CD14-positive monocyte (primary cell): ENCODE measurements at regions of chr12 and their contacts with region 1.

Region 1: GRCh38 chr12:110100315-110100970 is 23.7 kb upstream of the IFT81 start:
- DNase-seq: peak; percentile 65 to 80 (median 80)
- H3K4me3 ChIP-seq: no peak overlapping the region
- H3K4me3 Mint-ChIP-seq: no peak overlapping the region
- H3K27ac ChIP-seq: no peak overlapping the region
- H3K27ac Mint-ChIP-seq: peak overlapping the region in 5 of 7 donors; percentile 10 to 73 (median 60)
- H3K4me1 ChIP-seq: peaks cover 32 to 33% of the 10 kb centered on the region in 2 donors
- H3K4me1 Mint-ChIP-seq: peaks cover 29% of the 10 kb centered on the region
- H3K27me3 ChIP-seq: no peaks in the 10 kb centered on the region
- H3K27me3 Mint-ChIP-seq: no peaks in the 10 kb centered on the region
- CTCF ChIP-seq: peak; percentile 90

Region 2: DNA sequence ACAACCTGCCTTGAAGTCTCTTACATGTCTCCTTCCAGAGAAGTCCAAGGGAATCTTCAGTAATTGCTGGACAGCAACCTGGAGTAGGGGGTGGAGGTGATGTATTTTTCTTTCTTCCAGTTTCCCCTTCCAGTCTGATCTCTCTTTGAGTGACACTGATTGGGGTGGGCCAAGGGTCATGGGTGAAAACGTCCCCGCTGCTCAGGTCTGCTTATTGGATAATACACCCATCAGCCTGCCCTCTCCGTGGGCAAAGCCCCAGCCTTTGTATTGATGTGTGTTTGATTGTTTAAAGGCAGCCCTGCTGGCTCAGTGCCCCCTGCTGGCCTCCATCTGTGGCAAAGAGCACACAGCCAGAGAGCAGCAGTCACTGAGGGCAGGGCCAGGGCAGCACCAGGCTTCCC is 144.9 kb after region 1 on chr12:
- intact Hi-C with region 1: loop called (anchors 10 kb)
- DNase-seq: peak in 2 of 3 donors; percentile 47 to 51
- H3K4me3 ChIP-seq: no peak overlapping the region
- H3K4me3 Mint-ChIP-seq: no peak overlapping the region
- H3K27ac ChIP-seq: no peak overlapping the region
- H3K27ac Mint-ChIP-seq: no peak overlapping the region
- H3K4me1 ChIP-seq: peaks cover 16 to 19% of the 10 kb centered on the region in 2 donors
- H3K4me1 Mint-ChIP-seq: peaks cover 30% of the 10 kb centered on the region
- H3K27me3 ChIP-seq: no peaks in the 10 kb centered on the region
- H3K27me3 Mint-ChIP-seq: peaks cover 0 to 3% (median under 1%) of the 10 kb centered on the region in 3 donors
- CTCF ChIP-seq: peak; percentile 75

Region 3: DNA sequence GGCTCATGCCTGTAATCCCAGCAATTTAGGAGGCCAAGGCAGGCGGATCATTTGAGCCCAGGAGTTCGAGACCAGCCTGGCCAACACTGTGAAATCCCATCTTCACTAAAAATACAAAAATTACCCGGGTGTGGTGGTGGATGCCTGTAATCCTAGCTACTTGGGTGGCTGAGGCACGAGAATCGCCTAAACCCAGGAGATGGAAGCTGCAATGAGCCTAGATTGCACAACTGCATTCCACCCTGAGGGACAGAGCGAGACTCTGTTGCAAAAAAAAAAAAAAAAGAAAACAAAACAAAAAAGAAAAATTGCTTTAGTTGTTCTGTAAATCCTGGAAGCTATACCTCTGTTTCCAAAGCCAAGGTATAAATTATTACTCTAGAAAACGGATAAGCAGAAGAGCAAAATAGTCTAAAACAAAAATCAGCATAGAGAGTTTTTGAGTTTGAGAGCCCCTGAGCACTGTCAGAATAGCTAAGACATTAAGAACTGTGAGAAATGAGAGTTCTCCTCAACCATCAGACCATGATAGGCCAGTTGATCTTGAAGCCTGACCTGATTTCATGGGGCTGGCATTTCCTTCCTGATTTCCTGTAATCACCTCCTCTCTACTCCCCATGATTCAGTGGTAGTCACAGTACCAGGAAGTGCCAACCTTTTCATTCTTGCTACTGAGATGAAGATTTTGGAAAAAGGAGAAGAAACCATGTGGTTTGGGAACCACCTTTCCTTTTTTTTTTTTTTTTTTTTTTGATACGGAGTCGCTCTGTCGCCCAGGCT is 212.3 kb after region 1 on chr12:
- intact Hi-C with region 1: loop called in 1 of 2 experiments (anchors 10 kb)
- DNase-seq: peak; percentile 38 to 83 (median 69)
- H3K4me3 ChIP-seq: no peak overlapping the region
- H3K4me3 Mint-ChIP-seq: peak overlapping the region in 1 of 2 donors; percentile 39
- H3K27ac ChIP-seq: peak overlapping the region; percentile 34 to 53
- H3K27ac Mint-ChIP-seq: peak overlapping the region; percentile 67 to 91 (median 80)
- H3K4me1 ChIP-seq: peaks cover 42 to 61% of the 10 kb centered on the region in 2 donors
- H3K4me1 Mint-ChIP-seq: peaks cover 52% of the 10 kb centered on the region
- H3K27me3 ChIP-seq: no peaks in the 10 kb centered on the region
- H3K27me3 Mint-ChIP-seq: peaks cover 0 to 3% (median 0%) of the 10 kb centered on the region in 3 donors
- CTCF ChIP-seq: no peak

Region 4: GRCh38 chr12:110330544-110330943 is 230.1 kb after region 1 on chr12:
- intact Hi-C with region 1: loop called in 1 of 2 experiments (anchors 2 kb)
- DNase-seq: peak in 2 of 3 donors; percentile 31 to 34
- H3K4me3 ChIP-seq: no peak overlapping the region
- H3K4me3 Mint-ChIP-seq: no peak overlapping the region
- H3K27ac ChIP-seq: peak overlapping the region in 1 of 2 donors; percentile 33
- H3K27ac Mint-ChIP-seq: peak overlapping the region; percentile 6 to 78 (median 52)
- H3K4me1 ChIP-seq: peaks cover 7 to 10% of the 10 kb centered on the region in 2 donors
- H3K4me1 Mint-ChIP-seq: peaks cover 12% of the 10 kb centered on the region
- H3K27me3 ChIP-seq: no peaks in the 10 kb centered on the region
- H3K27me3 Mint-ChIP-seq: no peaks in the 10 kb centered on the region
- CTCF ChIP-seq: no peak

Region 5: GRCh38 chr12:110426406-110426805 is 326.0 kb after region 1 on chr12:
- intact Hi-C with region 1: loop called (anchors 5 to 10 kb)
- DNase-seq: no peak
- H3K4me3 ChIP-seq: no peak overlapping the region
- H3K4me3 Mint-ChIP-seq: no peak overlapping the region
- H3K27ac ChIP-seq: no peak overlapping the region
- H3K27ac Mint-ChIP-seq: no peak overlapping the region
- H3K4me1 ChIP-seq: no peaks in the 10 kb centered on the region
- H3K4me1 Mint-ChIP-seq: peaks cover 6% of the 10 kb centered on the region
- H3K27me3 ChIP-seq: no peaks in the 10 kb centered on the region
- H3K27me3 Mint-ChIP-seq: peaks cover 0 to 5% (median 1%) of the 10 kb centered on the region in 3 donors
- CTCF ChIP-seq: no peak

Region 6: GRCh38 chr12:110431957-110432587 is 331.6 kb after region 1 on chr12:
- intact Hi-C with region 1: loop called (anchors 5 to 10 kb)
- DNase-seq: no peak
- H3K4me3 ChIP-seq: peak overlapping the region in 2 of 3 experiments; percentile 44 to 72
- H3K4me3 Mint-ChIP-seq: no peak overlapping the region
- H3K27ac ChIP-seq: no peak overlapping the region
- H3K27ac Mint-ChIP-seq: peak overlapping the region in 1 of 7 donors; percentile 32
- H3K4me1 ChIP-seq: no peaks in the 10 kb centered on the region
- H3K4me1 Mint-ChIP-seq: peaks cover 4% of the 10 kb centered on the region
- H3K27me3 ChIP-seq: no peaks in the 10 kb centered on the region
- H3K27me3 Mint-ChIP-seq: peaks cover 0 to 3% (median 3%) of the 10 kb centered on the region in 3 donors
- CTCF ChIP-seq: no peak